ENCODE measurements at regions of chr12 and their contacts with region 1.

Region 1: DNA sequence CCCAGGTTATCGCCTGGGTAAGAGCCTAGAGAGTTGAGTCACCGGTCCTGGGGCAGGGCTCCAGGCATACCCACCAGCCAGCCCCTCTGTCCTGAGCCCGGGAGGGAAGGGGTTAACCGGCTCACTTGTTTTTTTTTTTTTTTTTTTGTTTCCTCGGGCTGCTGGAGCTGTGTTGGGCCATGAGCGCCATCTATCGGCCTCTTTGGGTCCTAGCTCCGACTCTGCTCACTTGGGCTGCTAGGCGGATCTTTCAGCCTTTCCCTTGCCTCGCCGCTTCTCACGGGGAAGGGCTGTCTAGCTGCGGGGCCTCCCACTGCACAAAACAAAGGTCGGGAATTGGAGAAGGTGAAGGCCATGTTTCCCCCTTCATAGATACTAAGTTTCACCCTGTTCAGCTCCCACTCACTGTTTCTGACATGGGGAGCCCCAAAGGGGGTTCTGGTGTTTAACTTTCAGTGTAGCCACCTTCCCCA is 2.8 kb upstream of the SMUG1 start:
- DNase-seq: no peak
- ATAC-seq: peak; percentile 70
- H3K4me3 ChIP-seq: no peak overlapping the region
- H3K27ac ChIP-seq: no peak overlapping the region
- H3K4me1 ChIP-seq: peaks cover 10% of the 10 kb centered on the region
- H3K27me3 ChIP-seq: peaks cover 2 to 3% of the 10 kb centered on the region in 2 experiments; a peak in 1 of 4 replicates
- CTCF ChIP-seq: peak; percentile 86 to 94 (median 88)
- EP300 ChIP-seq: no peak; a peak in 1 of 4 replicates
- POLR2A ChIP-seq: no peak
- RAD21 ChIP-seq: peak; percentile 92

Region 2: DNA sequence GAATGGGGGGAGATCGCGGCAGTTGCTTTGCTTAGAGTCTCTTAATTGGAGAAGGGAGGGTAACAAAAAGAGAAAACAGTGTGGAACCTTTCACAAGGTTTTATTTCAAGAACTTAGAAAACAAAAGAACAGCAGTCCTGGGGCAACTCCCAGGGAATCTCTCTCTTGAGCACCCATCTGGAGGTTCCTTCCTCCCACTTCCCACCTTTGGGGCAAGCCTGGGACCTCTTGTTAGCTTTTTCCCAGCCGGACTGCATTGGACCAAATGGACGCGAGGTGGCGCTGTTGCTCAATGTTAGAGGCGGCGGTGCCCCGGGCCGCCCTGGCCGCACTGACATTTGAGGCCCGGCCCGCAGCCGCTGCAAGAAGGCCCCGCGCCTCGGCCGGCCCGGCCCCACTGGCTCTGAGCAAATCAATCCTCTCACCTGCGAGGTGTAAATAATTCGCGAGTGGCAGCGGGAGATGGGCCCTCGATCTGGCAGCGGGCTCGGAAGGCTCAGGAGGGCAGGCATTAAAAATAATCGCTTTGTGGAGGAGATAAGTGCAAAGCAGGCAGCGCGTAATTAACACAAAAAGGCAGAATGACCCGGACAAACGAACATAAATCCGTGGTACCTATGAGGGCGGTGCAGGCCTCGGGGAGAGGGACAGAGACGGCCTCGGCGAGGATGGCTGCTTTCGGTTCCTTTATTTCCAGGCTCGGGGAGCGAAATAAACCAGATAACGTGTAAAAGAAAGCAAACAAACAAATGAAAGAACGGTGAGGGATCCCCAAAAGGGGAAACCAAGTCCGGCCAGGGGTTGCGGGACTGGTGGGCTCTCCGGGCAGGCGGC is 185.5 kb before region 1 on chr12:
- CTCF ChIA-PET with region 1: interaction called, 105 read pairs
- POLR2A ChIA-PET with region 1: no interaction called
- RAD21 ChIA-PET with region 1: interaction called, 34 read pairs
- SMC1A ChIA-PET with region 1: interaction called, 37 read pairs
- in situ Hi-C with region 1: no loop called
- intact Hi-C with region 1: loop called (anchors 1 kb)
- DNase-seq: no peak
- ATAC-seq: peak; percentile 91
- H3K4me3 ChIP-seq: peak overlapping the region; percentile 54; the same call in 1 of the 2 replicates
- H3K27ac ChIP-seq: no peak overlapping the region
- H3K4me1 ChIP-seq: peaks cover 6% of the 10 kb centered on the region
- H3K27me3 ChIP-seq: peaks cover 33 to 34% of the 10 kb centered on the region in 2 experiments
- CTCF ChIP-seq: peak; percentile 74 to 93 (median 84)
- EP300 ChIP-seq: 0 out of 4 replicates have a peak, but pooled peaks of 1 of the 2 experiments have one; percentile 15
- POLR2A ChIP-seq: no peak
- RAD21 ChIP-seq: peak; percentile 91

Region 3: DNA sequence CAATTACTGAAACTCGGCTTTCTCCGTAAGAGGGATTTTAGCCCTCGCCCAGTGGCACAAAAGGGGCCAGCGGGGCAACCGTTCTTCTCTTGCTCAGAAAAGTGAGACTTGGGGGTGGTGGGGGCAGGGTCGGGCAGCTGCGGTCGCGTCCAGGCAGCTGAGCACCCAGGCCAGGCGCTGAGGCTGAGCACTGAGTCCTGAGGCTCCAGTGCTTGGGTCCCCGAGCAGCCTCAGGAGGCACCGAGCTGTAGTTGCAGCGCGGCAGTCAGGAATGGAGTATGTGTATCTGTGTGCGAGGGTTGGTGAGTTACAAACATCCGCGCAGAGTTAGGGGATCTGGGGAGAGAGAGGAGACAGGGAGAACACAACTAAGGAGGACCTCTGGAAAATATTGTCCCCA is 167.5 kb before region 1 on chr12:
- CTCF ChIA-PET with region 1: interaction called, 343 read pairs
- POLR2A ChIA-PET with region 1: interaction called, 3 read pairs
- RAD21 ChIA-PET with region 1: interaction called, 222 read pairs
- SMC1A ChIA-PET with region 1: interaction called, 10 read pairs
- in situ Hi-C with region 1: loop called (anchors 10 kb)
- intact Hi-C with region 1: no loop called
- DNase-seq: no peak
- ATAC-seq: no peak
- H3K4me3 ChIP-seq: no peak overlapping the region
- H3K27ac ChIP-seq: no peak overlapping the region
- H3K4me1 ChIP-seq: peaks cover 16% of the 10 kb centered on the region
- H3K27me3 ChIP-seq: peaks cover 5 to 10% of the 10 kb centered on the region in 2 experiments
- CTCF ChIP-seq: no peak
- EP300 ChIP-seq: no peak
- POLR2A ChIP-seq: no peak
- RAD21 ChIP-seq: no peak

Region 4: GRCh38 chr12:54134850-54135249 is 56.7 kb before region 1 on chr12:
- CTCF ChIA-PET with region 1: interaction called, 20 read pairs
- POLR2A ChIA-PET with region 1: interaction called, 8 read pairs
- RAD21 ChIA-PET with region 1: interaction called, 30 read pairs
- SMC1A ChIA-PET with region 1: interaction called, 27 read pairs
- in situ Hi-C with region 1: no loop called
- intact Hi-C with region 1: no loop called
- DNase-seq: no peak
- ATAC-seq: peak; percentile 49; the same call in 2 of the 3 replicates
- H3K4me3 ChIP-seq: no peak overlapping the region
- H3K27ac ChIP-seq: no peak overlapping the region
- H3K4me1 ChIP-seq: no peaks in the 10 kb centered on the region
- H3K27me3 ChIP-seq: peaks cover 2 to 10% of the 10 kb centered on the region in 2 experiments; a peak in 3 of 4 replicates
- CTCF ChIP-seq: peak; percentile 22 to 38 (median 34); a peak in 4 of 6 replicates
- EP300 ChIP-seq: no peak
- POLR2A ChIP-seq: no peak
- RAD21 ChIP-seq: peak; percentile 42

Region 5: GRCh38 chr12:54175130-54175963 is 16.2 kb before region 1 on chr12:
- CTCF ChIA-PET with region 1: interaction called, 16 read pairs
- POLR2A ChIA-PET with region 1: no interaction called
- RAD21 ChIA-PET with region 1: interaction called, 6 read pairs
- SMC1A ChIA-PET with region 1: interaction called, 4 read pairs
- in situ Hi-C with region 1: no loop called
- intact Hi-C with region 1: no loop called
- DNase-seq: no peak
- ATAC-seq: peak; percentile 91
- H3K4me3 ChIP-seq: no peak overlapping the region
- H3K27ac ChIP-seq: no peak overlapping the region
- H3K4me1 ChIP-seq: peaks cover 21% of the 10 kb centered on the region
- H3K27me3 ChIP-seq: peaks cover 9 to 12% of the 10 kb centered on the region in 2 experiments
- CTCF ChIP-seq: no peak
- EP300 ChIP-seq: no peak
- POLR2A ChIP-seq: 0 out of 2 replicates have a peak, but pooled peaks have one; percentile 16
- RAD21 ChIP-seq: no peak

Measured in GM12878 (cell line).